ENCODE measurements at regions of chr7 and their contacts with region 1.

Region 1: DNA sequence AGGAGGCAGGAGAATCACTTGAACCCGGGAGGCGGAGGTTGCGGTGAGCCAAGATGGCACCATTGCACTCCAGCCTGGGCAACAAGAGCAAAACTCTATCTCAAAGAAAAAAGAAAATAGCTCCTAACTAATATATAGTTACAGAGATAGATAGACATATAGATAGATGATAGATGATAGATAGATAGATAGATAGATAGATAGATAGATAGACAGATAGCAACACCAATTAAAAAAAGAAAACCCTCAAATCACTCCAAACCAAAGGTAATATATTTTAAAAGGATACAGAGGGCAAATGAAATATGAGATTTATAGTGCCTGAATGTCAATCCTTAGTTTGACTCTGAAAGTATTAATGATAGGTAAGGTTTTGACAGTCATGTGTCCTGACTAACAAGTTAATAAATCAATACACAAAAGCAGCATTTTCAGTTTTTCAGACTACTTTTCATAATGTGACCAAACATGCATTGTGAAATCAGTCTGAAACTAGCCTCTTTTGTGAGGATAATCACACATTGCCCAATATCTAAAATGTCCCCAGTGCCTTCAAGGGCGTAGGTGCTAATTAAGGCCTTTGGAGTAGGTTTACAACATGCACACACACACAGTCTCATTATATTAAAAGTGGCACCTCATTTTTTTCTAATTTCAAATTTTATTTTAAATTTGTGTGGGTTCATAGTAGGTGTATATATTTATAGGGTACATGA is 61.2 kb downstream of the BPGM start:
- DNase-seq: no peak
- ATAC-seq: no peak
- H3K4me3 ChIP-seq: no peak overlapping the region
- H3K27ac ChIP-seq: no peak overlapping the region
- H3K4me1 ChIP-seq: peaks cover 0 to 14% (median 0%) of the 10 kb centered on the region in 12 donors
- H3K27me3 ChIP-seq: no peaks in the 10 kb centered on the region
- CTCF ChIP-seq: no peak
- POLR2A ChIP-seq: no peak

Region 2: DNA sequence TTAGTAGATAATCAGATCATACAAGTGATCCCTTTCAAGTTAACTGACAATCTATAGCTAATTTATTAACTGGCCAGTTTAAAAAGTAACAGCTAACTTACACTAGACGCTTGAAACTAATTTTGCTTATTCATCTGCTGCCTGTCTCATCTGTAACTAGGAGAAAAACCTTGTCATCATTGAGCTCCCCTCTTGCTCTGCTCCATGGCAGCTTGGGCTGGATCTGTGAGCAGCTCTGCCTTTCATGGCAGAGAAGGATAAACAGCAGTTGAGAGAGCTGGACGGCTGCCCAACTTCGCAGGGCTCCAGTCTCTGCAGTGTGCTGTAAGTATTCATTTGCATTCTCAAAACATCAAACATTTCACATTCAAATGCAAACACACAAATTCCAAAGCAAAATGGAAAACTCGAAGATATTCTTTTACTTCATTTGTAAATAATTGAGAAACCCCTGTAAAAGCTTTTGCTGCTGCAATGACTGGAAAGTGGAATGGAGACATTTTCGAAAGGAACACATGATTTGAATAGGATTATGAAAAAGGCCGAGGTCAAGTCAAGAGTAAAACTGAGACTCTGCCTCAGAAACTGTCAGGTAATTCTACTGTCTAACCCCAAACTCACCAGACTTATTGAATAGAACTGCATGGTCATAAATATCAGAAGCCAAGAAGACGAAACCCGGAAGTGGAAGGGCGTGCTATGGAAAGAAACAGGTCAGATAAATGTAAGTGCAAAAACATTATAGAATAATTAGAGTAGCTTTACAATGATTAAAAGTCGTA is 408.7 kb before region 1 on chr7:
- intact Hi-C with region 1: no loop called
- DNase-seq: peak in 3 of 5 donors; percentile 17 to 55 (median 22)
- ATAC-seq: peak in 2 of 4 donors; percentile 68 to 74
- H3K4me3 ChIP-seq: no peak overlapping the region
- H3K27ac ChIP-seq: peak overlapping the region in 1 of 12 donors; percentile 43
- H3K4me1 ChIP-seq: no peaks in the 10 kb centered on the region
- H3K27me3 ChIP-seq: no peaks in the 10 kb centered on the region
- CTCF ChIP-seq: no peak
- POLR2A ChIP-seq: no peak

Region 3: DNA sequence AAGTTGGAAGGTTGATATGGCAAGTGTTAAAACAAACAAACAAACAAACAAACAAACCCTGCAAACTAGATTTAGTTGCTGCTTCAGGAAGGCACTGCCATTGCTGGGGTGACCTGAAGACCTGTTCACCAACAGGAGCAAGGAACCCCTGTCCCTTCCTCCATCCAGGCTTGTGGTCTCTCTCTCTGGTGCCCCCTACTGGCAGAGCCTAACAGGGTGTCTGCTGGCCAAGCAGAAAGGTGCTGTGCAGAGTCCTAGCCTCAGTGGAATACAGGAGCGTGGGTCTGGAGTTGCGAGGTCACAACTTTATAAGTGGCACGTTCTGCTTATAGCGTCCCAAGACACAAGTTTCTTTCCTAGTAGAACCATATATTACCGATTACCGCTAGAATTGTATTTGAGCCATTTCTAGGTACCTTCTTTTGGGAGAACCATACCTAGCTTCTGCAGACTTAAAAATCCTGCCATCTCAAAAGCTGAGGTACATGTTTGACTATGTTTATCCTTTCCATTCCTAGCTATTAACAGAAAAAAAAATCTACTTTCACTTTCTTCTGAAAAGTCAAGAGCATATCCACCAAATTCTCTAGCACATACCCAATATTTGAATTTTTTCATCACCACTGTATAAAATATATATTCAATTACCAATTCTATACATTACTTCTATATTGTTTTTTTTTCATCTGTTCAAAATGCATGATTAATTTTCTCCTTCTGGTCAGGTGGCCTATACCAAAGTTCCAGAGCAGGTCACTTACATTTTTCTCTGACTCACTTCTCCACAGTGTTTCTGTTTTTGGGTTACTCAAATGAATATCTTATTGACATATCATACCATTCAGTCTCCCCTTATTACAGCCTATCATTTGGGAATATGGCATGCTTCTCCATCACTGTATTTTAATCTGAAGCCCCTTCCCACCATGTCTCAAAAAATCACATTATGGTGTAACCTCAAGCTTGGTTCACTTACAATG is 42.6 kb after region 1 on chr7:
- intact Hi-C with region 1: no loop called
- DNase-seq: peak; percentile 42 to 66 (median 45)
- ATAC-seq: peak in 3 of 4 donors; percentile 66 to 73 (median 72)
- H3K4me3 ChIP-seq: no peak overlapping the region
- H3K27ac ChIP-seq: no peak overlapping the region
- H3K4me1 ChIP-seq: peaks cover 0 to 12% (median 0%) of the 10 kb centered on the region in 12 donors
- H3K27me3 ChIP-seq: no peaks in the 10 kb centered on the region
- CTCF ChIP-seq: peak; percentile 46 to 77 (median 64)
- POLR2A ChIP-seq: no peak

Region 4: DNA sequence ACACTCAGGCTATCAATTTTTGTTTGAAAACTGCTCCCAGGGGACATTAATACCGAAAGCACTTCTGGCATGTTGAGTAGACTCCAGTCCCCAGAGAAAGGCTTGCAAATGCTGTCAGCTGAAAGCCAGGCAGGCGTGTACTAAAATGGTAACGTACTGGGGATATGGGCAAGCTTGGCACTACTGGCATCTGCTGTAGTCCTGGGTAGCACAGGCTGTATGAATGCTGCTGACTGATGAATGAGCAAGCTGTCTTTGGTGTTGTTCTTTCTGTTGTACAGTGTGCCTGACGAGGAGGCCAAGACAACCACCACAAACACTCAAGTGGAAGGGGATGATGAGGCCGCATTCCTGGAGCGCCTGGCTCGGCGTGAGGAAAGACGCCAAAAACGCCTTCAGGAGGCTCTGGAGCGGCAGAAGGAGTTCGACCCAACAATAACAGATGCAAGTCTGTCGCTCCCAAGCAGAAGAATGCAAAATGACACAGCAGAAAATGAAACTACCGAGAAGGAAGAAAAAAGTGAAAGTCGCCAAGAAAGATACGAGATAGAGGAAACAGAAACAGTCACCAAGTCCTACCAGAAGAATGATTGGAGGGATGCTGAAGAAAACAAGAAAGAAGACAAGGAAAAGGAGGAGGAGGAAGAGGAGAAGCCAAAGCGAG is 225.0 kb after region 1 on chr7:
- intact Hi-C with region 1: loop called in 1 of 10 experiments (anchors 5 kb)
- DNase-seq: peak; percentile 57 to 77 (median 60)
- ATAC-seq: peak; percentile 81 to 90 (median 88)
- H3K4me3 ChIP-seq: peak overlapping the region in 7 of 12 donors; percentile 0 to 32 (median 14)
- H3K27ac ChIP-seq: peak overlapping the region in 11 of 12 donors; percentile 38 to 84 (median 75)
- H3K4me1 ChIP-seq: peaks cover 0 to 66% (median 48%) of the 10 kb centered on the region in 12 donors
- H3K27me3 ChIP-seq: no peaks in the 10 kb centered on the region
- CTCF ChIP-seq: no peak
- POLR2A ChIP-seq: no peak